ENCODE measurements at regions of chr1 and their contacts with region 1.

Region 1: DNA sequence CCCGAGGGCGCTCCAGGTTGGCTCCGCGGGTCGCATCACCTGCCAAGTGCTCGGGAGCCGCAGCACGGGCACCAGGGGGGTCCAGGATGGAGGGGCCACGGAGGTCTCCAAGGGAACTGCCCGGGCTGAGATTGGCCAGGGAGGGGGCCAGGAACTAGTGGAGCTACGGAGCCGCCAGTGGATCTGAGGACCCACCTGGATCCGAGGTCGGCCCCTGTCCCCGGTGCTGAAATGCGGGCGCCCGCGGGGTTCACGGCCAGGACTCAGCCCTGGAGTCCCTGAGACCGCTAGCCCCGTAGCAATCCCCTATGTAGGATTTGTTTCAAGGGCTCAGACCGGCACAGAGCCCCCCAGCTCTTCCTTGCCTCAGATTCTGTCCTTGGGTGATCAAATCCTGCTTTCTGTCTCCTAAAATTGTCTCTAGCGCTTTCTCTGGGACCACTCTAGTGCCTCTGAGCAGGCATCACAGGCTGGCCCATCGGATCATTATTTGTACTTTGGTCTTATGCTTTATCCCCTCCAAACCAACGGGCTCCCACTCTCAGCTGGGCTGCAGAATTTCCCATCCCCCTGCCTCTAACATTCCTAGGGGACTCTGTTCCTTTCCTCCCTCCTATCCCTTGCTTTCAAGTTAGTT is 27.3 kb downstream of the KIAA2013 start:
- DNase-seq: peak; percentile 77
- H3K4me3 Mint-ChIP-seq: no peak overlapping the region
- H3K27ac Mint-ChIP-seq: no peak overlapping the region
- H3K4me1 Mint-ChIP-seq: no peaks in the 10 kb centered on the region
- H3K27me3 Mint-ChIP-seq: peaks cover 43% of the 10 kb centered on the region

Region 2: GRCh38 chr1:11858968-11859871 is 39.7 kb before region 1 on chr1:
- intact Hi-C with region 1: loop called (anchors 5 kb)
- DNase-seq: peak; percentile 92
- H3K4me3 Mint-ChIP-seq: no peak overlapping the region
- H3K27ac Mint-ChIP-seq: no peak overlapping the region
- H3K4me1 Mint-ChIP-seq: no peaks in the 10 kb centered on the region
- H3K27me3 Mint-ChIP-seq: peaks cover 47% of the 10 kb centered on the region

Region 3: GRCh38 chr1:11934302-11935056 is 35.5 kb after region 1 on chr1 and contains the start of gene PLOD1:
- intact Hi-C with region 1: no loop called
- DNase-seq: peak; percentile 94
- H3K4me3 Mint-ChIP-seq: peak within 1 kb of the TSS; percentile 86
- H3K27ac Mint-ChIP-seq: peak within 1 kb of the TSS; percentile 50
- H3K4me1 Mint-ChIP-seq: peaks cover 8% of the 10 kb centered on the region
- H3K27me3 Mint-ChIP-seq: no peaks in the 10 kb centered on the region
- total RNA-seq, gene PLOD1: 40.3 and 40.6 TPM in 2 replicates

Region 4: DNA sequence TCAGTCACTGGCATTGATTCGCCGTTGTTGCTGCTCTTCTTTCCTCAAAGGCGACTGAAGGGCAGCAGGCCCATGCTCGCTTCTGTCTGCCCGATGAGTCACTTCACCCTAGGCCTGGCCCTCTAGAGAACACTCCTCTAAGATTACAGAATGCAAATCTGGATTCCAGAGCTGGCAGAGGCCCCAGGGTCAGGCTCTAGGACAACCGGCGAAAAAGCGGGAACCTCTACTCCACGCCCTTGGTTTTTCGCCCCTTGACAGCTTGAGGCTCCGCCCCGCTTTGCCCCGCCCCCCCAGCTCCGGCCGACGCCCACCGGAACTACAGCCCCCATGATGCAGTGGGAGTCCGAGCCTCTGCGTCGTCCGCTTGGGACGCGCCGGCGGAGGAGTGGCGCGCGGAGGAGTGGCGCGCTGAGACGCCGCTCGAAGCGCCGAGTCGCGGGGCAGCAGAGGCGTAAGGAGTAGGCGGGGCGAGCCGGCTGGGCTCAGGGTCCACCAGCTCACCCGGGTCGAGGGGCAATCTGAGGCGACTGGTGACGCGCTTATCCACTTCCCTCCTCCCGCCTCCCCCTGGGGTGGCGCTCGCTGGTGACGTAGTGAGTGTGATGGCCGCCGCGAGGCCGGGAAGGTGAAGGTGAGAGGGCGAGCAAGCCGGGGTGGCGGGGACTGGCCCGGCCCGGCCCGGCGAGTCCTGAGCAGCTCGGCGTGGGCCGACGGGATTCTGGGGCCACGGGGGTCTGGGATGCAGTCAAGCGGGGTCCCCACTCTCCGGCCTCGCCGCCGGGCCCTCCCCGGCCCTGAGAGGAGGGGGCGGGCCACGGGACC is 81.1 kb after region 1 on chr1 and contains the start of gene MFN2:
- intact Hi-C with region 1: no loop called
- DNase-seq: peak; percentile 98
- H3K4me3 Mint-ChIP-seq: peak within 1 kb of the TSS; percentile 85
- H3K27ac Mint-ChIP-seq: peak within 1 kb of the TSS; percentile 85
- H3K4me1 Mint-ChIP-seq: peaks cover 29% of the 10 kb centered on the region
- H3K27me3 Mint-ChIP-seq: no peaks in the 10 kb centered on the region
- total RNA-seq, gene MFN2: 84.6 and 88.7 TPM in 2 replicates

Measured in activated CD4-positive, alpha-beta T cell treated with anti-CD3 and anti-CD28 coated beads, Interleukin-2, amount 10 ng/mL, durations not matched to agents 24 days and 14 days (primary cell).